Right cardiac atrium (tissue), 5 donors: ENCODE measurements at regions of chr2 and their contacts with region 1.

Region 1: DNA sequence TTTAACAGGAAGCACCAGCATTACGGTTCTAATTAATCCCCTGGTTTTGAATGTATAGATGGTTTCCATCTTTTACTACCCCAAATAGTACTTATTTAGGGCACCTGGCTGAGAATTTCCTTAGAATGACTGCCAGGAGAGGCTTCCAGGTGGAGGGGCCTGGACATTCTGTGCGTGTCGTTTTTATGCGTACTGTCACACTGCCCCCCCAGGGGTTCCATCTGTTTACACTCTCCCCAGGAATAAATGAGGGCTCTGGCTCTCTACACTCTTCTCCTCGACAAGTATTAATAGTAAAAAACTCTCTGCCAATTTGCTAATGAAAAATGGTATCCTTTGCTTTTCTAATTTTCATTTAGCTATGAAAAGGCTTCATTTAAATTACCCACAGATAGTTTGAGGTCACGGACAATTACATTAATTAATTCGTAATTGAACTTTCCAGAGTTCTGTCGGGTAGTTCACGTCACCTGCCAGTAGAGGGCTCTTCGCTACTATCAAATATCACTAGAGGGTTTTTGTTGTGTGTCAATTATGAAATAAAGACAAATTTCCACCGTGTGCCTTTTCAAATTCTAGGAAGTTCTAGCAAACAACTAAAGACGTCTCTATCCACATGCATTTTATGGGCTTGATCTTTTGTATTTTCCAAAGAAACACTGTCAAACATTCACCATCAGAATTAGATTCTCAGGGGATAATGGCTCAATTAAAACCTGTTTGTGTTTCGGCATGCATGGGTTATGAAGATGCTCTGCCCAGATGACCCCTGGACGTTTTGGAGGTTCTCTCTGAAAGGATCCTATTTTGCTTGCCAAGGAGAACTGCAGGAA is 88.8 kb upstream of the ASB18 start:
- DNase-seq: no peak
- ATAC-seq: peak in 1 of 2 donors; percentile 32
- H3K4me3 ChIP-seq: no peak overlapping the region
- H3K27ac ChIP-seq: no peak overlapping the region
- H3K4me1 ChIP-seq: no peaks in the 10 kb centered on the region
- H3K27me3 ChIP-seq: no peaks in the 10 kb centered on the region

Region 2: GRCh38 chr2:236512902-236513435 is 160.0 kb after region 1 on chr2:
- intact Hi-C with region 1: no loop called
- DNase-seq: peak; percentile 64 to 89 (median 80)
- ATAC-seq: peak; percentile 86 to 95
- H3K4me3 ChIP-seq: no peak overlapping the region
- H3K27ac ChIP-seq: no peak overlapping the region
- H3K4me1 ChIP-seq: no peaks in the 10 kb centered on the region
- H3K27me3 ChIP-seq: no peaks in the 10 kb centered on the region

Region 3: DNA sequence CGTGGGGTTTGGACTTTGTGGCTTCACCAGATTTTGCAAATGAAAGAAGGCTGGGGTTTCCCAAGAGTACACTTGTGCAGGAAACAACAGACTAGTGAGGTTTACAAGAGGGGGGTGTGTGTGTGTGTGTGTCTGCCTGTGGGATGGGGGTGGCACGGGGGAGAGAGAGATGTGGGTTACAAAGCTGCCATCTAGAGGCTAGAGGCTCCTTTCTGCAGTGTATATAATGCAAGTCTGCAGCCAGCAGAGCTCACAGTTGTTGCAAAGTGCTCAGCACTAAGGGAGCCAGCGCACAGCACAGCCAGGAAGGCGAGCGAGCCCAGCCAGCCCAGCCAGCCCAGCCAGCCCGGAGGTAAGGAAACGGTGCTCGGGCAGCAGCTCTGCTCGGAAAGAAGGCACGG is 216.6 kb after region 1 on chr2 and contains the start of gene ACKR3:
- intact Hi-C with region 1: loop called in 1 of 4 experiments (anchors 10 kb)
- DNase-seq: peak; percentile 82 to 91 (median 90)
- ATAC-seq: peak; percentile 81 to 88
- H3K4me3 ChIP-seq: peak within 1 kb of the TSS; percentile 79
- H3K27ac ChIP-seq: peak within 1 kb of the TSS; percentile 97
- H3K4me1 ChIP-seq: peaks cover 2% of the 10 kb centered on the region
- H3K27me3 ChIP-seq: no peaks in the 10 kb centered on the region
- total RNA-seq, gene ACKR3: 27.4 to 50.1 (median 33.8) TPM

Region 4: DNA sequence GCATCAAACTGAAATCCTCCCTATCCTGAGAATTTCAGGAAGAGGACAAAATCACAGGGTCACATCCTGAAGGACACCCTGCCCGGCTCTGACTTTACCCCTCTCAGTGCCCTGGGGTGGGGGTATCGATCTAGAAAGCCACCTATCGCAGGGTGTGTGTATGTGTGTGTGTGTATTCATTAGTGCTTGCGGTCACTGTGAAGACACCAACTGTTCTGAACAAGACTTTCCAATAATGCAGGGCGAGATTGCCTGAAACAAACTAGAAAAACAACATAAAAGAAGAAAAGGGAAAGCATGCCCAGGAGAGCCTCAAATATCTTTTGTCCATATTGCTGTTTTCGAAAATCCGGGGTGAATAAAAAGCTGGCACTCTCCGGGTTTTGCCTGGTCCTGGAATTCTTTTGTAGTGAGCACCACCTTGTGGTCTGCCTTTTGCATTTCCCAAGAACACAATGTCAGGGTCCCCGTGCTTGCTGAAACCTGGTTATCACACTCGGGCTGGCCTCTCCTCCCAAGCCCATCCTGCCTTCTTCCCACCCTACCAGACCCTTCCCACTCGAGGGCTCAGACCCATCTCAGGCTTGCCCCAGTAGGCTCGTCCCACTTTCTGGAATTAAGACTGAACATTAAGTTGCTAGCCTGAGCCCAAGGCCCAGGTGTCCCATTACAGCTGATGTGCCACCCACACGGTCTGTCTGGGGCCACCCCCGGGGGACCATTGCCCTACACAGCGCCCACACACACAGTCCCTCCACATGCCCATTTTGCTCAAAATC is 707.7 kb after region 1 on chr2:
- intact Hi-C with region 1: loop called (anchors 2 to 10 kb)
- DNase-seq: peak; percentile 30 to 54 (median 31)
- ATAC-seq: peak; percentile 65 to 78
- H3K4me3 ChIP-seq: no peak overlapping the region
- H3K27ac ChIP-seq: no peak overlapping the region
- H3K4me1 ChIP-seq: no peaks in the 10 kb centered on the region
- H3K27me3 ChIP-seq: no peaks in the 10 kb centered on the region

Region 5: GRCh38 chr2:237072067-237072931 is 719.3 kb after region 1 on chr2:
- intact Hi-C with region 1: loop called in 1 of 4 experiments (anchors 5 kb)
- DNase-seq: peak; percentile 67 to 87 (median 79)
- ATAC-seq: peak; percentile 51 to 70
- H3K4me3 ChIP-seq: no peak overlapping the region
- H3K27ac ChIP-seq: no peak overlapping the region
- H3K4me1 ChIP-seq: no peaks in the 10 kb centered on the region
- H3K27me3 ChIP-seq: no peaks in the 10 kb centered on the region